ENCODE measurements at regions of chr9 and their contacts with region 1.

Region 1: DNA sequence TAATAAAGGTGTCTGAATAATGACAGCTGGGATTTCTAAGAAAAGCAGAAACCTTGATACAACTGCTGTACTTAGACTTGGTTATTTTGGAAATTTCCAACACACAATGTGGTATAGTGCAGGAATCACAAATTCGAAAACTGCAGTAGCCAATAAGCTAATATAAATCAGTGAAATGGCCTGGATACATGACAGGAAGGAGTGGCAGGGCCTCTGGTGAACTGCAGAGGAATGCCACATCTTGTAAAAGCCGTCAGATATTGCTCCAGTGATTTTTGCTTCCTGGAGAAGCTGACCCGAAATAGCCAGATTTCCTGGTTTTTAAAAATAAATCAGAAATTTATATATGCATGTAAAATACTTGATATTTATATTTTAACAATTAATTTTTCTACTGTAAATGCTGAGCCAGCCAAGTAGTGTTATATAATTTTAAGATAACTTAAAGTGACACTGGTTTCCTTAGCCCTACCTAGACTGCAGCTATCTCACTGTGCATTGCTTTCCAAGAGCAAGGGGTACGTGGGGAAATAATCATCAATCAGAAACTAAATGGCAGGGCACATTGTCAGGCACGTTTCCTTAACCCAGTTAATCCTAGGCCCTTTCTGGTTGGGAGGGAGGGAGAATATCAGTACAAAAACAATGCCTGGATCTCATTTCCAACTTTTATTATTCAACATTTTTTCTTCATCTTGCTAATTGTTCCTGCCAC is 182.4 kb downstream of the RASEF start:
- DNase-seq: no peak
- ATAC-seq: no peak
- H3K4me3 ChIP-seq: no peak overlapping the region
- H3K27ac ChIP-seq: no peak overlapping the region
- H3K4me1 ChIP-seq: no peaks in the 10 kb centered on the region
- H3K27me3 ChIP-seq: no peaks in the 10 kb centered on the region
- CTCF ChIP-seq: no peak

Region 2: DNA sequence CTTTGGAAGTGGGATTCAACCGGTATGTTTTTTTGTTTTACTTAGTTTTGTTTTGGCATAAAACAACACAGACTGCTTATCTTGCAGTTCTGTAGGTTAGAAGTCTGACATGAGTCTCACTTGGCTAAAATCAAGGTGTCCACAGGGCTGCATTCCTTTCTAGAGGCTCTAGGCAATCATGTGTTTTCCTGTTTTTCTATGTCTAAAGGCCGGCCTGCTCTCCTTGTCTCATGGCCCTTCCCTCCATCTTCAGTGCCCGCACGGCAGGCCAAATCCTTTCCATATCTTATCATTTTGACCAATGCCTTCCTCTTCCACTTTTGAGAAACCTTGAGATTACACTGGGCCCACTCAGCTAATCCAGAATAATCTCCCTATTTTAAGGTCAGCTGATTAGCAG is 18.6 kb before region 1 on chr9:
- CTCF ChIA-PET with region 1: no interaction called
- POLR2A ChIA-PET with region 1: no interaction called
- in situ Hi-C with region 1: no loop called
- intact Hi-C with region 1: no loop called
- DNase-seq: no peak
- ATAC-seq: no peak
- H3K4me3 ChIP-seq: no peak overlapping the region
- H3K27ac ChIP-seq: no peak overlapping the region
- H3K4me1 ChIP-seq: no peaks in the 10 kb centered on the region
- H3K27me3 ChIP-seq: no peaks in the 10 kb centered on the region
- CTCF ChIP-seq: no peak

Region 3: GRCh38 chr9:82895822-82896110 is 15.3 kb after region 1 on chr9:
- CTCF ChIA-PET with region 1: no interaction called
- POLR2A ChIA-PET with region 1: no interaction called
- in situ Hi-C with region 1: no loop called
- intact Hi-C with region 1: loop called (anchors 2 kb)
- DNase-seq: no peak
- ATAC-seq: no peak
- H3K4me3 ChIP-seq: no peak overlapping the region
- H3K27ac ChIP-seq: no peak overlapping the region
- H3K4me1 ChIP-seq: no peaks in the 10 kb centered on the region
- H3K27me3 ChIP-seq: no peaks in the 10 kb centered on the region
- CTCF ChIP-seq: no peak

Region 4: GRCh38 chr9:82939451-82939850 is 59.0 kb after region 1 on chr9:
- CTCF ChIA-PET with region 1: no interaction called
- POLR2A ChIA-PET with region 1: no interaction called
- in situ Hi-C with region 1: no loop called
- intact Hi-C with region 1: no loop called
- DNase-seq: no peak
- ATAC-seq: no peak
- H3K4me3 ChIP-seq: no peak overlapping the region
- H3K27ac ChIP-seq: no peak overlapping the region
- H3K4me1 ChIP-seq: no peaks in the 10 kb centered on the region
- H3K27me3 ChIP-seq: no peaks in the 10 kb centered on the region
- CTCF ChIP-seq: no peak

Region 5: DNA sequence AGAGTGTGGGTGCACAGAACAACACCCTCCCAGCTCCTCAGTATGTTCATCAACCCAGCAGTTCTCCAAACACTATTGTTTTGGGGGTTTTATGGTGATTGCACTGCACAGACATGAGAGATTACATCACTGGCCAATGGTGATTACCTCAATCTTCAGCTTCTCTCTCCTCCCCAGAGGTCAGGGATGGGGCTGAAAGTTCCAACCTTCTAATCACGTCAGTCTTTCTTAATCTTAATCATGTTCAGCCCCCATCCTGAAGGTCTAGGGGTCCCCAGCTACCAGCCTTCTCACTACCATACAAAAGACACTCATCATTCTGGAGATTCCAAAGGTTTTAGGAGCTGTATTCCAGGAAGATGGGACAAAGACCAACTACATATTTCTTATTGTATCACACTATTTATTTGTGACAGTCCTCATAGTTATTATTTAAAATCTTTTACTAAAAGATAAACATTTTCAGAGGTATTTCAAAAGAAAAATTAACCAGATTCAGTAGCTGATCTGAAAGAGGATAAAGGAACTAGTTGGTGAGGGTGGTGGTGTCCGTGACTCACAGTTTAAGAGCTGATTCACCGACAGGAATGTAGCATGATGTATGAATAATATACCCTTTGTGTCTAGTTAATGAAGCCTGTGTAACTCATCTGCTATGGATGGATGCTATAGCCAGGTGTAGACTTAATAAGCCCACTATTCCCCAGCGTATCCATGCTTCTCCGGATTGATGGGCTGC is 146.8 kb after region 1 on chr9:
- CTCF ChIA-PET with region 1: no interaction called
- POLR2A ChIA-PET with region 1: no interaction called
- in situ Hi-C with region 1: no loop called
- intact Hi-C with region 1: no loop called
- DNase-seq: peak; percentile 36
- ATAC-seq: peak; percentile 93; the same call in 1 of the 2 replicates
- H3K4me3 ChIP-seq: no peak overlapping the region
- H3K27ac ChIP-seq: no peak overlapping the region
- H3K4me1 ChIP-seq: no peaks in the 10 kb centered on the region
- H3K27me3 ChIP-seq: no peaks in the 10 kb centered on the region
- CTCF ChIP-seq: no peak